ENCODE measurements at regions of chr12 and their contacts with region 1.

Region 1: DNA sequence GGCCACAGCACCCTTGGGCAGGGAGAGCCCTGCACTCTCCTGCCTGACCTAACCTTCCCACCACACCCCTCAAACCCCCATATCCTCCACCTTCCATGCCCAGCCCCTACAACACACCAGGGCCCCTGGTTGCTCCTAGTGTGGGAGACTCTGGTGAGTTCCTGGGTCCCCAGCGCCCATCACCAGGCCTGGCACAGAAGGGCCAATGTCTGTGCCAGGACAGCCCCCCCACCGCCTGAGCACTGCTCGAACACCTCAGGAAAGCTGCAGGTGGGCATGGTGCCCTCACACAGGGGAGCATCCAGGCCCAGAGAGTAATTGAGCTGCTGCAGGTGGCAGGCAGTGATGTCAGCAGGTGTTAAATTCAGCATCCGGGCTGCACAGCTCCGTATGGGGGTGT is 15.2 kb downstream of the ADCY6 start:
- DNase-seq: no peak
- ATAC-seq: no peak
- H3K4me3 Mint-ChIP-seq: no peak overlapping the region
- H3K27ac Mint-ChIP-seq: no peak overlapping the region
- H3K4me1 Mint-ChIP-seq: peaks cover 14% of the 10 kb centered on the region
- H3K27me3 Mint-ChIP-seq: peaks cover 5% of the 10 kb centered on the region

Region 2: DNA sequence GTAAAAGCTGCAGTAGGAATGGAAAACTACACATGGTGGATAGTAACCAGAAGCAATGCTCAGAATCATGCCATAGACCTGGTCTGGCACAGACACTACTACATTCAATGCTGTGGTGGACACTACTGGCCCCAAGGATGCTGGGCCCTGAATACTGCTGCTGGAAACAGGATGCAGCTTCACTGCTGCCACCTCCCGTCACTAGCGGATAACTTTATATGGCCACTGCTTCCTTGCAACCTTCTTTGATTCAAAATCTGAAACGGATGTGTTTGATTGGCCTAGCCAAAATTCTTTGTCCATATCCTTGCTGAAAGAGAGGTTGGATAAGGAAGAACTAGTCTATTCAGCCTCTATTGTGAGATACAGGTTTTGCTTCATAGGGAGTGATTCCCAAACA is 15.5 kb before region 1 on chr12:
- CTCF ChIA-PET with region 1: interaction called, 15 read pairs
- POLR2A ChIA-PET with region 1: no interaction called
- DNase-seq: no peak
- ATAC-seq: no peak
- H3K4me3 Mint-ChIP-seq: no peak overlapping the region
- H3K27ac Mint-ChIP-seq: no peak overlapping the region
- H3K4me1 Mint-ChIP-seq: peaks cover 17% of the 10 kb centered on the region
- H3K27me3 Mint-ChIP-seq: peaks cover 2% of the 10 kb centered on the region

Measured in activated CD8-positive, alpha-beta T cell treated with anti-CD3 and anti-CD28 coated beads, Interleukin-2, amount 10 ng/mL, durations not matched to agents 7 days and 5 days (primary cell).